GM23248 (cell line): ENCODE measurements at regions of chr14 and their contacts with region 1.

Region 1: GRCh38 chr14:89425931-89426330 is 8.9 kb upstream of the FOXN3 start:
- DNase-seq: peak; percentile 96
- H3K4me3 ChIP-seq: no peak overlapping the region
- H3K27ac ChIP-seq: peak overlapping the region; percentile 39
- H3K4me1 ChIP-seq: peaks cover 52% of the 10 kb centered on the region
- H3K27me3 ChIP-seq: no peaks in the 10 kb centered on the region

Region 2: GRCh38 chr14:89750281-89750755 is 324.4 kb after region 1 on chr14:
- in situ Hi-C with region 1: loop called (anchors 10 kb)
- DNase-seq: peak; percentile 17
- H3K4me3 ChIP-seq: no peak overlapping the region
- H3K27ac ChIP-seq: no peak overlapping the region
- H3K4me1 ChIP-seq: peaks cover 11% of the 10 kb centered on the region
- H3K27me3 ChIP-seq: no peaks in the 10 kb centered on the region

Region 3: GRCh38 chr14:89915114-89915878 is 489.4 kb after region 1 on chr14:
- in situ Hi-C with region 1: loop called (anchors 10 kb)
- DNase-seq: peak; percentile 86
- H3K4me3 ChIP-seq: no peak overlapping the region
- H3K27ac ChIP-seq: peak overlapping the region; percentile 42
- H3K4me1 ChIP-seq: peaks cover 45% of the 10 kb centered on the region
- H3K27me3 ChIP-seq: no peaks in the 10 kb centered on the region